CD8-positive, alpha-beta T cell (primary cell): ENCODE measurements at regions of chr12 and their contacts with region 1.

Region 1: DNA sequence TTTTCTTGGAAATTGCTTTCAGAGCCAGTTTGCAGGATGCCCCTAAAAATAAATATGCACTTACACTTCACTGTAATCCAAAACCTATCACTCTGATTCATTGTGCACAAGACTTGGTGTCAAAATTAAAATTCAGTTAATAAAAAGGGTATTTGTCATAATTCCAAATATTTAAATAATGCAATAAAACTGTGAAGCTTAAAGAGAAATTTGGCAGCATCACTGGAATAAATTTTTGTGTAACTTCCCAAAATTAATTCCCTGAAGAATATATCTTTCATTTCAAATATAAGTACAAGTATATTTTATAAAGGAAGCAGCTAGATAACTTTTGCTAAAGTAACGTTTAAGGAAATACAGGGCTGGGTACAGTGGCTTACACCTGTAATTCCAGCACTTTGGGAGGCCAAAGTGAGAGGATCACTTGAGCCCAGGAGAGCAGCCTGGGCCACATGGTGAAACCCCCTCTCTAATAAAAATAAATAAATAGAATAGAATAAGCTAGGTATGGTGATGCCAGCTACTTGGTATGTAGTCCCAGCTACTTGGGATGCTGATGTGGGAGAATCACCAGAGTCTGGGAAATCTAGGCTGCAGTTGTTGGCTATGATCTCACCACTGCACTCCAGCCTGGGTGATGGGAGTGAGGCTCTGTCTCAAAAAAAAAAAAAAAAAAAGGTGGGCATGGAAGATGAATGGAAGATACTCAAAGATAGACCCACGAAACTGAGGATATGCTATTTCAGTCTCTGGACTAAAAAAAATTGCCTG is 233.8 kb downstream of the FBXL14 start:
- DNase-seq: no peak
- ATAC-seq: no peak
- H3K4me3 ChIP-seq: no peak overlapping the region
- H3K4me3 Mint-ChIP-seq: no peak overlapping the region
- H3K27ac ChIP-seq: no peak overlapping the region
- H3K27ac Mint-ChIP-seq: no peak overlapping the region
- H3K4me1 ChIP-seq: no peaks in the 10 kb centered on the region
- H3K4me1 Mint-ChIP-seq: no peaks in the 10 kb centered on the region
- H3K27me3 ChIP-seq: no peaks in the 10 kb centered on the region
- H3K27me3 Mint-ChIP-seq: no peaks in the 10 kb centered on the region
- CTCF ChIP-seq: no peak

Region 2: GRCh38 chr12:1398673-1399072 is 38.0 kb after region 1 on chr12:
- CTCF ChIA-PET with region 1: no interaction called
- POLR2A ChIA-PET with region 1: no interaction called
- intact Hi-C with region 1: loop called in 1 of 2 experiments (anchors 1 kb)
- DNase-seq: peak in 1 of 9 experiments; percentile 7
- ATAC-seq: no peak
- H3K4me3 ChIP-seq: no peak overlapping the region
- H3K4me3 Mint-ChIP-seq: no peak overlapping the region
- H3K27ac ChIP-seq: no peak overlapping the region
- H3K27ac Mint-ChIP-seq: no peak overlapping the region
- H3K4me1 ChIP-seq: no peaks in the 10 kb centered on the region
- H3K4me1 Mint-ChIP-seq: no peaks in the 10 kb centered on the region
- H3K27me3 ChIP-seq: no peaks in the 10 kb centered on the region
- H3K27me3 Mint-ChIP-seq: no peaks in the 10 kb centered on the region
- CTCF ChIP-seq: no peak